Endothelial cell of umbilical vein (primary cell): ENCODE measurements at regions of chr2 and their contacts with region 1.

Region 1: DNA sequence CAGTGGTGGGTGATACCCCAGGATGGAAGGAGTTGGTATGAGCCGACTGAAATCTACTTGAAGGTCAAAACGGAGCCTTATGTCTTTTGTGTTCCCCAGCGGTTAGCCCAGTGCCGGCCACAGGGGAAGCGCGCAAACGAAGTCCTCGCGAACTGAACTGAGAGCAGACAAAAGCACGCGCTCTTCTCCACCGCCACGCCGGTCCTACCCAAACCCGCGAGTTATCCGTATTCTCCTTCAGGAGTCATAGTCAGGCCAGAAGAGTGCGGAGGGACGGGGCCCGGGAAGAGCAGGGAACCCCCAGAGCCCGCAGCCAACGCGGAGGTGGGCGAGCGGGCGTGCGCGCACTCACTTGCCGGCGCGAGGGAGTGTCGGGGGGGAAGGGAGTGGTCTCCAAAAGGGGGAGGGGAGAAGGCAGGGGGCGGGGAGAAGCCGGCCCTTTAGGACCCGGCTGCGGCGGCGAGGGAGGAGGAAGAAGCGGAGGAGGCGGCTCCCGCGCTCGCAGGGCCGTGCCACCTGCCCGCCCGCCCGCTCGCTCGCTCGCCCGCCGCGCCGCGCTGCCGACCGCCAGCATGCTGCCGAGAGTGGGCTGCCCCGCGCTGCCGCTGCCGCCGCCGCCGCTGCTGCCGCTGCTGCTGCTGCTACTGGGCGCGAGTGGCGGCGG is at the start of gene IGFBP2:
- DNase-seq: peak; percentile 56
- H3K4me3 ChIP-seq: peak within 1 kb of the TSS; percentile 52 to 79 (median 59)
- H3K27ac ChIP-seq: no peak within 1 kb of the TSS
- H3K4me1 ChIP-seq: peaks cover 30% of the 10 kb centered on the region
- H3K27me3 ChIP-seq: peaks cover 6 to 9% of the 10 kb centered on the region in 2 experiments
- CTCF ChIP-seq: no peak
- POLR2A ChIP-seq: no peak
- total RNA-seq, gene IGFBP2: 212 and 229 TPM in 2 replicates

Region 2: GRCh38 chr2:216114714-216115557 is 518.1 kb before region 1 on chr2:
- CTCF ChIA-PET with region 1: no interaction called
- POLR2A ChIA-PET with region 1: no interaction called
- dilution Hi-C with region 1: no loop called
- intact Hi-C with region 1: loop called (anchors 10 kb)
- DNase-seq: peak; percentile 100
- H3K4me3 ChIP-seq: peak overlapping the region; percentile 33 to 80 (median 35)
- H3K27ac ChIP-seq: peak overlapping the region; percentile 87
- H3K4me1 ChIP-seq: peaks cover 26% of the 10 kb centered on the region
- H3K27me3 ChIP-seq: no peaks in the 10 kb centered on the region
- CTCF ChIP-seq: peak; percentile 84 to 95
- POLR2A ChIP-seq: peak; percentile 86

Region 3: DNA sequence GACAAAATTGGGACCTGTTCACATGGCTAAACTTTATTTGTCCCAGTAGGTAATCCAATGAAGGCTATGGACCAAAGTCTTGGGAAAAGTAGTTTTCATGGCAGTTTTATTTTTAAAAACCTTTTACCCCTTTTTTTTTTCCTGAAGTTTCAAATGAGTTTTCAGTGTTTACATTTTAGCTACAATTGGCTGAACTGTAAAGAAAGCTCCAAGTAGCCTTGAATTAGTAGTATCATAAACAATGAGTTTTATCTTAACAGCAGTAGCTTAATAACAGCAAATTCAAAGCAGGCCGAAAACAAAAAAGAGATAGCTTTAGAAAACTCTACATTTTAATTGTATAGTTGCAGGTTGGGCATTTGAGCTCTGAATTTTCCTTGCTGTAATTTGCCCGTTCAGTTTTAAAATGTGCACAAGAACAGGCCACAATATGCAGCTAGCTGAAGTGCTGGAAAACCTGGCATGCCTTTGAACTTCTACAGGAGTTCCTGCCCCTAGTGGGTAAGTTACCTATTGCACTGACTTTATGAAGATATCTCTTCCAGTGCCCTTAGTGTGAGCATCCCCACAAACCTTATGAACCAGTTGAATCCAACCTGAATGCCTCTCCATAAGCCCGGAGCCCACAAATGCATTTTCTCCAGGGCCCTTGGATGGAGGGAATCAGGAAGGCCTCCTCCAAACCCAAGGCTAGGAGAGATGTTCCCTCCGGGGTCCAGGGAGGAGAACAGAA is 417.3 kb before region 1 on chr2:
- CTCF ChIA-PET with region 1: no interaction called
- POLR2A ChIA-PET with region 1: no interaction called
- dilution Hi-C with region 1: no loop called
- intact Hi-C with region 1: loop called (anchors 10 kb)
- DNase-seq: no peak
- H3K4me3 ChIP-seq: no peak overlapping the region
- H3K27ac ChIP-seq: no peak overlapping the region
- H3K4me1 ChIP-seq: peaks cover 32% of the 10 kb centered on the region
- H3K27me3 ChIP-seq: no peaks in the 10 kb centered on the region
- CTCF ChIP-seq: peak; percentile 20 to 23
- POLR2A ChIP-seq: no peak

Region 4: GRCh38 chr2:216535454-216535995 is 97.6 kb before region 1 on chr2:
- CTCF ChIA-PET with region 1: no interaction called
- POLR2A ChIA-PET with region 1: no interaction called
- dilution Hi-C with region 1: no loop called
- intact Hi-C with region 1: loop called (anchors 1 kb)
- DNase-seq: peak; percentile 96
- H3K4me3 ChIP-seq: no peak overlapping the region
- H3K27ac ChIP-seq: peak overlapping the region; percentile 66
- H3K4me1 ChIP-seq: peaks cover 36% of the 10 kb centered on the region
- H3K27me3 ChIP-seq: no peaks in the 10 kb centered on the region
- CTCF ChIP-seq: no peak
- POLR2A ChIP-seq: peak; percentile 68

Region 5: DNA sequence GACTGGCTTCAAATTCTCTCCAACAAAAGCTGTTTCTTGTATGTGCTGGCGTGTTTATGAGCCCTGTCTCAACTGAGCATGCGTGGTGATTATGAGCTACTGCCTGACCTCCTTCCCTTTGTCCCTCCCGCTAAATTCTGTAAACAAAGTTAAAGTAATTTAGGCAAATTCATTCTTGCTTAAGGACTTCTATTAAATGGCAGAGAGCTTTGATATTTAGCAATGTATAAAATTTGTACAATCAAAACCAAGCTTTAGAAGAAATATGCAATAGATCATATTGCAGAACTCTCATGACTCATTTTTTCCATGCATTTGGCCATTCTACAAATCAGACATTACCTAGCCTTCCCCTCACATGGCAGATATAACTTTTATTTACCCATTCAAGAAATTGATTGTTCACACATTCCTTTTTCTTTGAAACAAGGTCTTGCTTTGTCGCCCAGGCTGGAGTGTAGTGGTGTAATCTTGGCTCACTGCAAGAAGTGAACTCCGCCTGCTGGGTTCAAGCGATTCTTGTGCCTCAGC is 18.3 kb after region 1 on chr2:
- CTCF ChIA-PET with region 1: interaction called, 4 read pairs
- POLR2A ChIA-PET with region 1: no interaction called
- dilution Hi-C with region 1: no loop called
- intact Hi-C with region 1: loop called (anchors 1 kb)
- DNase-seq: peak; percentile 55
- H3K4me3 ChIP-seq: no peak overlapping the region
- H3K27ac ChIP-seq: no peak overlapping the region
- H3K4me1 ChIP-seq: peaks cover 17% of the 10 kb centered on the region
- H3K27me3 ChIP-seq: no peaks in the 10 kb centered on the region
- CTCF ChIP-seq: no peak
- POLR2A ChIP-seq: no peak